Activated T-helper 2 cell treated with anti-CD3 and anti-CD28 coated beads, Interferon-gamma antibody, Interleukin-2, Interleukin-4, amounts not matched to agents 10 μg/mL and 5 μg/mL and 100 μg/mL, durations not matched to agents 14 hours and 24 hours and 36 hours (primary cell): ENCODE measurements at regions of chr5 and their contacts with region 1.

Region 1: GRCh38 chr5:139293504-139294373 is at the start of gene MATR3:
- DNase-seq: peak; percentile 90
- H3K4me3 Mint-ChIP-seq: peak within 1 kb of the TSS; percentile 91
- H3K27ac Mint-ChIP-seq: peak within 1 kb of the TSS; percentile 97
- H3K4me1 Mint-ChIP-seq: peaks cover 33% of the 10 kb centered on the region
- H3K27me3 Mint-ChIP-seq: no peaks in the 10 kb centered on the region
- total RNA-seq, gene MATR3: 259 TPM in 2 replicates

Region 2: GRCh38 chr5:138226910-138227309 is 1066.8 kb before region 1 on chr5:
- intact Hi-C with region 1: no loop called
- DNase-seq: no peak
- H3K4me3 Mint-ChIP-seq: no peak overlapping the region
- H3K27ac Mint-ChIP-seq: no peak overlapping the region
- H3K4me1 Mint-ChIP-seq: peaks cover 4% of the 10 kb centered on the region
- H3K27me3 Mint-ChIP-seq: peaks cover 30% of the 10 kb centered on the region

Region 3: GRCh38 chr5:138331449-138332368 is 962.0 kb before region 1 on chr5 and contains the start of gene CDC25C:
- intact Hi-C with region 1: loop called (anchors 10 kb)
- DNase-seq: peak; percentile 98
- H3K4me3 Mint-ChIP-seq: peak within 1 kb of the TSS; percentile 83
- H3K27ac Mint-ChIP-seq: peak within 1 kb of the TSS; percentile 86
- H3K4me1 Mint-ChIP-seq: peaks cover 21% of the 10 kb centered on the region
- H3K27me3 Mint-ChIP-seq: no peaks in the 10 kb centered on the region
- total RNA-seq, gene CDC25C: 8.4 and 9.0 TPM in 2 replicates

Region 4: GRCh38 chr5:138542956-138543729 is 750.6 kb before region 1 on chr5 and contains the start of gene ETF1:
- intact Hi-C with region 1: loop called (anchors 10 kb)
- DNase-seq: peak; percentile 100
- H3K4me3 Mint-ChIP-seq: peak within 1 kb of the TSS; percentile 100
- H3K27ac Mint-ChIP-seq: peak within 1 kb of the TSS; percentile 100
- H3K4me1 Mint-ChIP-seq: peaks cover 56% of the 10 kb centered on the region
- H3K27me3 Mint-ChIP-seq: no peaks in the 10 kb centered on the region
- total RNA-seq, gene ETF1: 169 and 170 TPM in 2 replicates

Region 5: DNA sequence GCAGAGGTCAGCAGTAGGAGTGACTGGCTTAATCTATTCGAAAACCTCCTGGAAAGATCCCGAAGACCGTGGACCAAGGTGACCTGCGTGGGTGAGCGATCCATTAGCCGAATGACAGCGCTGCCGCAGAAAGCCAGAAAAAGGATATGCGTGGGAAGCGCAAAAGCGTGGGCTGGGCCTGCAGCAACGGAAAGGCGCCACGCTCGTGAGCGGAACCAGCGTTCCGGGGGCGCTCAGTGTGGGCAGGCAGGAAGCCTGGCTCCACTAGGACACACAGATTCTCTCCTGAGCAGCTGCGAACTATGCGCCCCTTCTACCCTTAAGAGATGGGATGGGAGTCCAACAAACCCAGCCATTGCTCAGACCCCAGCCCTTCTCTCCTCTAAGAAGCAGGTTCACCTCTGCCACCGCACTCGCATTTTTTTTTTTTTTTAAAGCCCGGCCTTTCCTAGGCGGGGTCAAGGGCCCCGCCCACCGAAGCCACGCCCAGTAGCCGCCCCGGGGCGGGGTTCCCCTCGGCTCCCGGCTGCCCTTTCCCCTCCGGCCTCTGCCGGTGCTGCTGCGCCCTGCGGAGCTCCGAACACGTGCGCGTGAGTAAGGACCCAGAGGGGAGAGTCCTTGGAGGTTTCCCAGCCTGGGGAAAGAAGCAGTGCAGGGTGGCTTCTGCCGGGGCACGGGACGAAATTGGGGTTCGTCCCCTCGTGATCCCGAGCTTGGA is 20.0 kb before region 1 on chr5:
- intact Hi-C with region 1: loop called (anchors 2 kb)
- DNase-seq: peak; percentile 88
- H3K4me3 Mint-ChIP-seq: peak overlapping the region; percentile 94
- H3K27ac Mint-ChIP-seq: peak overlapping the region; percentile 42
- H3K4me1 Mint-ChIP-seq: peaks cover 42% of the 10 kb centered on the region
- H3K27me3 Mint-ChIP-seq: no peaks in the 10 kb centered on the region

Region 6: GRCh38 chr5:139308797-139309196 is 15.1 kb after region 1 on chr5:
- intact Hi-C with region 1: loop called (anchors 2 kb)
- DNase-seq: no peak
- H3K4me3 Mint-ChIP-seq: no peak overlapping the region
- H3K27ac Mint-ChIP-seq: peak overlapping the region; percentile 48
- H3K4me1 Mint-ChIP-seq: peaks cover 57% of the 10 kb centered on the region
- H3K27me3 Mint-ChIP-seq: no peaks in the 10 kb centered on the region

Region 7: DNA sequence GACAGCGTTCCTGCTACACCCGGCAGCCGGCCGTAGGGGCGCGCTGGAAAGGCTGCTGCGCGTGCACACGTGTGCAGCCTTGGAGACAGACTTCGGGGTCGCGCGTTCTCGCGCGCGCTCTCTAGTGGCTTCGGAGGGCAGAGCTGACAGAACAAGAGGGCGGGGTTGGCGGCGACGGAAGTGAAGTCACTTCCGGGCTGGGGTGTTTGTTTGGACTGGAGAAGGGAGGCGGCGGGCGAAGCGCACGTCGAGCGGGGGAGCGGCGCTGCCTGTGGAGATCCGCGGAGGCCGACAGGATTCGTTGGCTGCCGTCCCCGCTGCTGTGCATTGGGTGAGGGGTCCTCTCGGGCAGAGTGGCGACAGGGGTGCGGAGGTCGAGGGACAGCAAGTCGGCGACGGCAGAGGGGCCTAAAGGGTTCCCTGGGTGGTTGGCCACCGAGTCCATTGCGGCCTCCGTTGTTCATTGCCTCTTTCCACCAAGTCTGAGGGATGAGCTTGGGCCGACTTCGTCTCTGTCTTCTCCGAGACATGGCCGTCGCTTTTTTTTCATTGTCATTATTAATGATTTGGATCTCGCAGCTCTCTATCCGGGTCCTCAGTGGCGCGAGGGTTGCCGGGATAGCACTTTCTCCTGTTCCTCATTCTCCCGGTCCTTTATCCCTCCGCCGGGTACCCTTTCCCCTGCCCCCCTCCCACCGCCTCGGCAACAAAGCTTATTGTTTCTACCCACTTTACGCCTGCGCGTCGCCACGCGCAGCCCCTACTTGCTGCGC is 48.1 kb after region 1 on chr5 and contains the start of gene PAIP2:
- intact Hi-C with region 1: loop called (anchors 1 kb)
- DNase-seq: peak; percentile 97
- H3K4me3 Mint-ChIP-seq: peak within 1 kb of the TSS; percentile 93
- H3K27ac Mint-ChIP-seq: peak within 1 kb of the TSS; percentile 98
- H3K4me1 Mint-ChIP-seq: peaks cover 27% of the 10 kb centered on the region
- H3K27me3 Mint-ChIP-seq: no peaks in the 10 kb centered on the region
- total RNA-seq, gene PAIP2: 98.2 and 107 TPM in 2 replicates

Region 8: GRCh38 chr5:139392678-139393496 is 99.1 kb after region 1 on chr5:
- intact Hi-C with region 1: loop called (anchors 2 kb)
- DNase-seq: peak; percentile 84
- H3K4me3 Mint-ChIP-seq: peak overlapping the region; percentile 96
- H3K27ac Mint-ChIP-seq: peak overlapping the region; percentile 97
- H3K4me1 Mint-ChIP-seq: peaks cover 51% of the 10 kb centered on the region
- H3K27me3 Mint-ChIP-seq: no peaks in the 10 kb centered on the region

Region 9: DNA sequence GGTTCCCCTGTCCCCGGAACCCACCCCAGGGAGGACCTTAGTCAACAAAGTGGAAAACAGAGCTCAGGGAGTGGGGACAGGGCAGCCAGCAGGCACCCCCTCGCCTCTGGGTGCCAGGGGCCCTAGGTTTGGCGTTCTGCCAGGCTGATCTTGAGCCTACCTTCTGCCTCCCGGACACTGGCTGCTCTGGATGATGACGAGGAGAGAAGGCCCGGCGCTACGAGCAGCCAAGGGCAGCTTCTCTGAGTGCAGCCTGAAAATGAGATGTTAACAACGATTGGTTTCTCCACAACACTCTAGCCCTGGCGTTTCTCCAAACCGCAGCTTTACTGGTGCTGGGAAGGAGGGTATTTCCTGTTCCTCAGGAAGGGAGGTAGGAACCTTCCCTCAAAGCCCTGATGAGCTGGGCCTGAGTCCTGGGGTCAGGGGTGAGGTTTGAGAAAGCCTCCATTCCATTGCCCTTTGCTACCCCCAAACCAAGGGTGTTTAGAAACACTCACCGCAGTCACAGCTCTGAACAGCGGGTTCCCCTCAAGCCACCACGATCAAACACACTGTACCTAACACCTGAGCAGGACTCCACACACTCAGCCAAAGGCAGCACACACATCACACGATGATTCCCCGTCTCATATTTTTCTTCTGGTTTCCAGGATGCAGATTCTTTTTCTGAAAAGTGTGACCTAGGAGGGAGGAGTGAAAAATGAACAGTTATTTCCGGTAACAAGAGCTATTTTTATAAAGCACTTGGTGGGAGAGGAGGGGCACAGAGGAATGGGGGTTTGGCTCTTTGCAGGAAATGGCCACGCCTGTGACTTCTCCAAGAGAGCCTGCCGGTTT is 188.5 kb after region 1 on chr5 and contains the start of gene STING1:
- intact Hi-C with region 1: no loop called
- DNase-seq: peak; percentile 55
- H3K4me3 Mint-ChIP-seq: peak within 1 kb of the TSS; percentile 88
- H3K27ac Mint-ChIP-seq: peak within 1 kb of the TSS; percentile 99
- H3K4me1 Mint-ChIP-seq: peaks cover 30% of the 10 kb centered on the region
- H3K27me3 Mint-ChIP-seq: no peaks in the 10 kb centered on the region
- total RNA-seq, gene STING1: 167 and 169 TPM in 2 replicates